Activated CD4-positive, alpha-beta memory T cell treated with anti-CD3 and anti-CD28 coated beads, Interleukin-2, amount 10 ng/mL, durations not matched to agents 7 days and 5 days (primary cell): ENCODE measurements at regions of chr2 and their contacts with region 1.

Region 1: DNA sequence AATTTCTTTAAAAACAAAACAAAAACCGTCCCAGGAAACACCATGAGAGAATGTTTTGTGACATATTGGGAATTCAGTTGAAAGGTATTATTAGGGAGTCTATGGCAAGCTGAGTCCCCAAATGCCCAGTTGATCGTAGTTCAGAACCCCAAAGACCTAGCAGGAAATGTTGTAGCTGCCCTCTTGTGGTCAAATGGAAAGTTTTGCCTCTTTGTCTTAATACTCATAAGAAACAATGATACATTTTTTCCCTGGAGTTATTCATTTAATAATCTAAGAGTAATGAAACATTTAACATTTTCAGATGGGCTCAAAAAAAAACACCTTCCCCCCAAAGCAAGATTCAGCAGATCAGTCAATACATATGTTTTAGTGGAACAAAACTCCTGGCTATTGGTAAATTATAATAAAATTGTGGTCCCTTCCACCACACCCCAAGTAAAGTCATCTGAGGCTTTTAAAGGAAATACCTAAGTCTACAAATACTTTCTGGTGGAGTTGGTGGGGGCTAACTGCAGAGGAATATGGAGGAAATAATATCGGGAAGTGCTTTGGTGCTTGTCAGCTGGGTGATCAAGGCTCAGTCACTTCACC is 37.8 kb upstream of the EFEMP1 start:
- DNase-seq: no peak
- H3K4me3 Mint-ChIP-seq: no peak overlapping the region
- H3K27ac Mint-ChIP-seq: no peak overlapping the region
- H3K4me1 Mint-ChIP-seq: no peaks in the 10 kb centered on the region
- H3K27me3 Mint-ChIP-seq: peaks cover 2% of the 10 kb centered on the region

Region 2: GRCh38 chr2:55707751-55708150 is 253.7 kb before region 1 on chr2:
- CTCF ChIA-PET with region 1: no interaction called
- POLR2A ChIA-PET with region 1: no interaction called
- DNase-seq: no peak
- H3K4me3 Mint-ChIP-seq: no peak overlapping the region
- H3K27ac Mint-ChIP-seq: no peak overlapping the region
- H3K4me1 Mint-ChIP-seq: peaks cover 6% of the 10 kb centered on the region
- H3K27me3 Mint-ChIP-seq: peaks cover 19% of the 10 kb centered on the region

Region 3: DNA sequence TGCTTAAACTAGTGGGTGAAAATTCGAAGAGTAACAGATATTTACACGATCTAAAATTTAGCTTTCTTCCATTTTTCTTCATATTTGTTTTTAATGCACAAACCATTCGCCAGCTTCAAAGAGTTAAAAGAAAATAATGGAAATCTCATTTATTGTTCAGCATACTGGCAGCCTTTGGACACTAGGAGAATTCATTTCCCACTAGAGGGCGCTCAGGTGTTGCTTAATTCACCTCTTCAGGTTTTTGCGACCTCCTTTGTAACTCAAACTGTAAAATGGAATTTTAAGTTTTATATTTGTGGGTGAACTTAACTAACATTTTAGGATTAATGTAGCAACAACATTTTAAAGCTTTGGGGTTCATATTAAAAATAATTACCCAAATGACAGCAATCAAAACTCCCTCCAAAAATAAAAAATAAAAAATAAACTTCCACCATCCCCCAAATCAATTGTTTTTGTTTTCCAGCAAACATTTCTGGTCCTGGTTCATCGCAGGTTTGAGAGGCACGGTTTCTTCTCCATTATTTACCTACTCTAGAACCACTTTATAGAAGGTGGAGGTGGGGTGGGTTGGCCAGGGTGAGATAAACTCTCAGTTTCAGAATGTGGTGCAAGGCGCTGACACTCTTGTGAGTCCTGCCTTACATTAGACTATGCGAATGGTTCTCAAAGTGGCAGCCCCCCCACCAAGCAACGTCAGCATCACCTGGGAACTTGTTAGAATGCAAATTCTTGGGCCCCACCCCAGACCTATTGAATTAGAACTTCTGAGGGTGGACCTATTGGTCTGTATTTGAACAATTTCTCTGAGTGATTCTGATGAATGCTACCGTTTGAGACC is 243.0 kb before region 1 on chr2:
- CTCF ChIA-PET with region 1: interaction called, 24 read pairs
- POLR2A ChIA-PET with region 1: no interaction called
- DNase-seq: peak; percentile 38
- H3K4me3 Mint-ChIP-seq: no peak overlapping the region
- H3K27ac Mint-ChIP-seq: no peak overlapping the region
- H3K4me1 Mint-ChIP-seq: no peaks in the 10 kb centered on the region
- H3K27me3 Mint-ChIP-seq: peaks cover 1% of the 10 kb centered on the region

Region 4: DNA sequence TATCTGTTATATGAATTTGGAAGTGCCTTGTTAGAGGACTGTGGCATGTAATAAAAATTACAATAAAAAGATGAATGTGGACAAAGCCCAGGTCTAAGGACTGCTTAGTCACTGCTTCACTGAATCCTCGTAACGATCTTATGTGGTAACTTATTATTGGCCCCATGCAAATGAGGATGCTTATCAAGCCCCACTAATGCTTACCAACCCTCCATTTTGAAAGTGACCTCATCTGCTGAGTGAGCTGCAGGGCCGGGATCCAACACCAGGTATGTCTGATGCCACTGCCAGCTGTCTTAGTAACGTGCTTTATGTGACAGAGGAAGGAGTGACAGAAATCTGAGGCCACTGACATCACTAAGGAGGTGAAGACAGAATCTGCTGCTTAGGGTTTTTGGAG is 157.1 kb after region 1 on chr2:
- CTCF ChIA-PET with region 1: no interaction called
- POLR2A ChIA-PET with region 1: no interaction called
- DNase-seq: no peak
- H3K4me3 Mint-ChIP-seq: no peak overlapping the region
- H3K27ac Mint-ChIP-seq: no peak overlapping the region
- H3K4me1 Mint-ChIP-seq: no peaks in the 10 kb centered on the region
- H3K27me3 Mint-ChIP-seq: no peaks in the 10 kb centered on the region